Activated CD4-positive, alpha-beta T cell treated with anti-CD3 and anti-CD28 coated beads, Interleukin-2, amount 10 ng/mL, durations not matched to agents 24 days and 14 days (primary cell): ENCODE measurements at regions of chr19 and their contacts with region 1.

Region 1: DNA sequence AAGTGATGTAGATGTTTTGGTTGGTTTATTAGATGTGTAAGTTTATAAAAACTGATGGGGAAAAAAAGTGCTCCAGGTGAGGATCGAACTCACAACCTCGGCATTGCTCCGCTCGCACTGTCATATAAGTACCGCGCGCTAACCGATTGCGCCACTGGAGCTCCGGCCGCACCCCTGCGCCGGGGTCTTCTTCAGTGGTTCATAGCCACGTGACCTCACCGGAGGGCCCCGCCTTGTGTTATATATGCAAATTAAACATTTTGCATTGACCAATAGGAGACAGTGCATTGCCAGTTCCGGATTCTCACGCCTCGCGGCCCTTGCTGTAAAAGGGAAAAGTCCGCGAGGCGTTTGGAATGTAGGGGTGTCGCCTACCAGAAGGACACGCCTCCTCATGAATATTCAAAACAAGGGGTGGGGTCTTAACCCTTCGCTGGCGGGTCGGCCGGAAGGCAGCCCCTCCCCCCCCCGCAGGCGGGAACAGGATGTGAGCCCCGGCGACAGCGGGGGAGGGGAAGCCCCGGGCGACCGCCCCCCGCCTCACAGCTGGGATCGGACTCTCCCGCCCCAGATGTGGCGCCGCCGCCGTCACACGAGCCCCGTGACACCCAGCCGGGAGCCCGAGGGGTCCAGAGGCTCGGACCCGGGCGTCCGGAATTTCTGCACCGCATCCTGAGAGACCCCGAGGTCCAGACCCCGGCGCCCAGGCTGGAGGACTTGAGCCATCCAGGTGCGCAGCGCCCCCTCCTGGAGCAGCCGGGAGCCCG is at the start of gene PLEKHG2:
- DNase-seq: peak; percentile 99
- H3K4me3 Mint-ChIP-seq: peak within 1 kb of the TSS; percentile 87
- H3K27ac Mint-ChIP-seq: peak within 1 kb of the TSS; percentile 88
- H3K4me1 Mint-ChIP-seq: peaks cover 47% of the 10 kb centered on the region
- H3K27me3 Mint-ChIP-seq: no peaks in the 10 kb centered on the region
- total RNA-seq, gene PLEKHG2: 42.0 and 46.1 TPM in 2 replicates

Region 2: DNA sequence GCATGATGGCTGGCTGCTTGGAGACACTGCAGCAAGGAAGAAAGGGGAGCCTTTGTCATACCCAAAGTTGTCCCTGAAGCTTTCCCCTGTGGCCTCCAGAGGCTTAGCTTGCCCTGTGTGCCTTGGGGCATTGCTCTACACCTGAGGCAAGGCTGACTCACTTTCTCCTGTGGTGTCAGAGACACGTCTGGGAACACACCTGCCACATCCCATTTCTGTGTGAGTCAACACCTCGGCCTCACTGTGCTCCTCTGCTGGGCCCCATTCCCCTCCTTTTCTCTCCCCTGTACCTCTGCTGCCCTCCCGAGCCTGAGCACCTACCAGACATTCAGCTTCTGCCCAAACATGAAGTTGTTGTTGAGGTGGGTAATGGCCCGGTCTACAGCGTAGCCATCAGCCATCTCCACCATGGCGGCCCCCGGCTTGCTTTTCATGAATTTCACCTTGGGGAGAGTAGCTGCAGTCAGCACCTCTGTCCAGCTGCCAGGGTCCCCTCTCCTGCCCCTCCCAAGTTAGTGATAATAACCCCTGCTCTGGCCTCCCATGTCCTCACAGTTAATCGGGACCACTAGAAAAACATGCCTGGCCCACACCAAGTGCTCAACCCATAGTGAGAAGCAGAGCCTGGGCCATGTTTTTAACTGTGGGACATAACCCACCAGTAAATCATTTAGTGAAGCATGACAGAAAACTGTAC is 573.6 kb before region 1 on chr19:
- intact Hi-C with region 1: no loop called
- DNase-seq: no peak
- H3K4me3 Mint-ChIP-seq: peak overlapping the region; percentile 28
- H3K27ac Mint-ChIP-seq: peak overlapping the region; percentile 85
- H3K4me1 Mint-ChIP-seq: peaks cover 44% of the 10 kb centered on the region
- H3K27me3 Mint-ChIP-seq: no peaks in the 10 kb centered on the region

Region 3: DNA sequence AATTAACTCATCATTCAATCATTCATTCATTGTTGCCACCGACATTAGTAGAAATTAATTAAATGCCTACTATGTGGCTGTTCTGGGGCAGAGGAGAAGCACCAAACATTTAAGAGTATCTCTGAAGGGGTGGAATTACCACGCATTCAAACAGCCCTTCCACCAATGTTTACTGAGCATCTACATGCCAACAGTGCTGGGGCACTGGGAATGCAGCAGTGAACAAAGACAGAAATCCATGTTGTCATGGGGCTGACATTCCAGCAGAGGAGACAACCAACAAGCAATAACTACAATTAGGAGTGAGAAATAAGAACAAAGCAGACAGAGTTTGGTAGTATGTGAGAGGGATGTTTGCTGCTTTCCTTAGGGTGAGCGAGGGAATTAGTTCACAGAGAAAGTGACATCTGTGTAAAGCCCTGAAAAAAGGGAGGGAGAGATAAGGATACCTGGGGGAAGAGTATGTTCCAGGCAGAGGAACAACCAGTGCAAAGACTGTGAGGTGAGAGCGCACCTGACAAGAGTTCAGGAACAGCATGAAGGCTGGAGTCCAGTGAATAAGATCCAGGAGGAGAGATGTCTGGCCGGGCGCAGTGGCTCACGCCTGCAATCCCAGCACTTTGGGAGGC is 288.0 kb before region 1 on chr19:
- intact Hi-C with region 1: loop called (anchors 1 kb)
- DNase-seq: no peak
- H3K4me3 Mint-ChIP-seq: peak overlapping the region; percentile 68
- H3K27ac Mint-ChIP-seq: peak overlapping the region; percentile 76
- H3K4me1 Mint-ChIP-seq: peaks cover 27% of the 10 kb centered on the region
- H3K27me3 Mint-ChIP-seq: peaks cover 7% of the 10 kb centered on the region

Region 4: DNA sequence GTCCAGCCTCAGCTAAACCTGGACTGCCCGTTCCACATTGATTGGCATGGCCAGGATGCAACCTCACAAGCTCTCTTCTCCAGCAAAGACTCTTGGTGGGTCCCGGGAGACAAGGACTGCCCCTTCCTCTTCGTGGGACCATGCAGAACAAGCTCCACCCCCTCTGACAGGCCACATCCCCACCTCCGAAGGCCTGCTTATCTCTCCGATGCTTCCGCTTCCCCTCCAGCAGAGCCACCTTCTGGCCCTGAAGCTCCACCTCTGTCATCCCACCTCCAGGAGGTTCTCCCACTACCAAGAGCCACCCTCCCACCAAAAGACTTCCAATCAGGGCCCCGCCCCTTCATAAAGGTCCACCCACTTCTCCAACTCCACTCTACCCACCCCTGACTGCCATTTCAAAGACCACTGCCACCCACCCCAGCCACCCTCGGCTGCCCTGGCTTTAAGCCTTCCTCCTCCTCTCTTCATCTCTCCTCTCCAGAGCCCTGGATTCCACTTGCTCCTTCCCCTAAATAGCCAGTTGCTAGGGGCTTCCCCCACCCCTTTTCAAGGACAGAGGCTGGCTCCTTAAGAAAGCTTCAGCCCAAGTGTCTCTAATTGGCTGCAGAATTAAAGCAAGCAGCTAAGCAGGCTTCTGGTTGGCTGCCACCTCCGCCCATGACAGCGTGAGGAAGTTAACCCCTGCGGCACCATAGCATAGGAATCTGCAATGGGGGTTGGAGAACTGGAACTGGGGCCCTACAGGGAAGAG is 101.5 kb before region 1 on chr19:
- intact Hi-C with region 1: no loop called
- DNase-seq: no peak
- H3K4me3 Mint-ChIP-seq: no peak overlapping the region
- H3K27ac Mint-ChIP-seq: no peak overlapping the region
- H3K4me1 Mint-ChIP-seq: no peaks in the 10 kb centered on the region
- H3K27me3 Mint-ChIP-seq: no peaks in the 10 kb centered on the region

Region 5: DNA sequence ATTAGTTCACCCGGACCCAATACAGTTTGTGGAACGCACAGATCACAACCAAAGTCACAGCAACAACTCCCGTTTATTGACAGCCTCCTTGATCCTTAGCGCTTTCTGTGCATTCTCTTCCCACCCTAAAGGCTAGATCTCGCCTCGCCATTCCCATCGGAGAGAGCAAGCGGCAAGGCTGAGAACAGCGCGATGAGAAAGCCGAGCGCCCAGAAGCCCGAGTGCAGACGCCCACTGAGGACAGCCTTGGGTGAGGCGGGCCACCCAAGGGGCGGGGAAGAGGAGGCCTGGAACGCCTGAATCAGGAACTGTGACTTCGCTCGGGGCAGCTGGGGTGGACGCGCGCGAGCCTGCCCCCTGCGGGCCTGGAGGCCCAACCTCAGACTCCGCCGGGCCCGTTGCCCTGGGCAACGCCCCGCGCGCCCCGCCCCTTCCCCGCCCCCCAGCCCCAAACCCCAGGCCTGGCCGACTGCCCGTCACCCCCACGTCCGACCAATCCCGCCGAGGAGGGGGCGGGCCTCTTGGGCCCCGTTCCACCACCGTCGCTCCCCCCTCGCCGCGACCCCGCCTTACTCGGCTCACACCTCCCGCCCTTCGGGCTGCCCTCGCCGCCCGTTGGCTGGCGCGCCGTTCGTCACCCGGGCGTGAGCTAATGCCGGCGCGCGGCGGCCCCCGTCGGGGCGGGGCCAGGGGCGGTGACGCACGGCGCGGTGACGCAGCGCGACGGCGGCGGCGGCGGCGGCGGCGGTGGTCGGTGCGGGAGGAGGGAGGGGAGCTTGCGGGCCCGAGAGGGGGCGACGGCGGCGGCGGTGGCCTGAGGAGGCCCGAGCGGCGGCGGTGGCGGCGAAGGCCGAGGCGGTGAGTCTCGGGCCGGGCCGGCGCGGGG is 70.3 kb before region 1 on chr19 and contains the start of gene SAMD4B:
- intact Hi-C with region 1: loop called (anchors 2 kb)
- DNase-seq: peak; percentile 100
- H3K4me3 Mint-ChIP-seq: peak within 1 kb of the TSS; percentile 91
- H3K27ac Mint-ChIP-seq: peak within 1 kb of the TSS; percentile 90
- H3K4me1 Mint-ChIP-seq: peaks cover 68% of the 10 kb centered on the region
- H3K27me3 Mint-ChIP-seq: no peaks in the 10 kb centered on the region
- total RNA-seq, gene SAMD4B: 68.9 and 71.4 TPM in 2 replicates

Region 6: DNA sequence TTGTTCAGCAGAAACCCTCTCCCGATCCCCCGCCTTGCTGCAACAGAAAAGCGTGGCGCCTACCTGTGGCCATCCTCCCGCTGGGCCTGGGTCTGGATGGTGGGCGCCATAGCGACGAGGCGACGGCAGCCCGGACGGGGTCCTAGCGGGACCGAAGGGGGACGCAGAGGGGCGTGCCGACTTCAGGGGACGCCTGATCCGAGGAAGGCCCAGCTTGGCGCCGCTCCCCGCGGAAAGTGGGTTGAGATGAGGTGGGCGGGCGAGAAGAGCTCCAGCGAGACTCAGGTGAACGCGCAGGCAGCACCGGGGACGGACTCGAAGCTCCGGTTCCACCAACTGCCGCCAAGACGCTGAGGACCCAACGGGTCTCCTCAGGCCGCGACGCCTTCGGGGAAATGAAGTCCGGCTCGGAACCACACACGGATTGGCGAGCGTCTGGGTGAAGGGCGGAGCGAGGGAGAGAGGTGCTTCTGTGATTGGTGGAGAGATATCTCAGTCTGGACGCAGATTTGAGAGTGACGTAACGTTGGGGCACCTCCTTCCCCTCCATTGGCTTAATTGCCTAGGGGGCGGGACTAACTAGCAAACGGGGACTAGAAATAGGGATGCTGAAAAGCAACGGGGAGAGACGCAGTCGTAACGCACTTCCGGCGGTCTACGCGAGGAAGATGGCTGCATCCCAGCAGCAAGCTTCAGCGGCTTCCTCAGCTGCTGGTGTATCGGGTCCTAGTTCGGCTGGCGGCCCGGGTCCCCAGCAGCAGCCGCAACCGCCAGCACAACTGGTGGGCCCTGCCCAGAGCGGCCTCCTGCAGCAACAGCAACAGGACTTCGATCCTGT is 21.3 kb before region 1 on chr19 and contains the starts of genes MED29 and PAF1:
- intact Hi-C with region 1: loop called (anchors 1 kb)
- DNase-seq: peak; percentile 99
- H3K4me3 Mint-ChIP-seq: peak within 1 kb of the TSS; percentile 98
- H3K27ac Mint-ChIP-seq: peak within 1 kb of the TSS; percentile 97
- H3K4me1 Mint-ChIP-seq: peaks cover 28% of the 10 kb centered on the region
- H3K27me3 Mint-ChIP-seq: no peaks in the 10 kb centered on the region
- total RNA-seq, gene MED29: 36.0 and 38.7 TPM in 2 replicates
- total RNA-seq, gene PAF1: 47.1 and 50.6 TPM in 2 replicates

Region 7: GRCh38 chr19:39435499-39436349 is 23.4 kb after region 1 on chr19 and contains the start of gene RPS16:
- intact Hi-C with region 1: loop called (anchors 1 kb)
- DNase-seq: peak; percentile 100
- H3K4me3 Mint-ChIP-seq: peak within 1 kb of the TSS; percentile 91
- H3K27ac Mint-ChIP-seq: peak within 1 kb of the TSS; percentile 99
- H3K4me1 Mint-ChIP-seq: peaks cover 45% of the 10 kb centered on the region
- H3K27me3 Mint-ChIP-seq: no peaks in the 10 kb centered on the region
- total RNA-seq, gene RPS16: 2,597 and 2,671 TPM in 2 replicates

Region 8: DNA sequence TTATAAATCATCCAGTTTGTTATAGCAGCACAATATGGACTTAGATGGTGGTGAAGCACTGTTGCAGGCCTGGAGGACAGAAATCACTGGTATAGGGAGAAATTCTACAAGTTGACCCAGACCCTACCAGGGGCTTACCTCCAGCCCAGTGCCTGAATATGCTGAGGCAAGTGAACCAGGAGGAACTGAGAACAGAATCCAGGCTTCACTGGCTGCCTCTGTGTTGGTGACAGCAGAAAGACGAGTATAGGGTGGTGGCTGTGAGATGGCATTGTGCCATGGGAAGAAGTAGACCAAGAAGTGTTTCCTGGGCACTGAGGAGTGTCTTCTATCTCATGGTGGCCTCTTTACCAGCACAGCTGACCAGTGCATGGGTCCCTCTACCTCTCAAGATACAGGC is 143.6 kb after region 1 on chr19:
- intact Hi-C with region 1: no loop called
- DNase-seq: peak; percentile 49
- H3K4me3 Mint-ChIP-seq: no peak overlapping the region
- H3K27ac Mint-ChIP-seq: no peak overlapping the region
- H3K4me1 Mint-ChIP-seq: peaks cover 42% of the 10 kb centered on the region
- H3K27me3 Mint-ChIP-seq: no peaks in the 10 kb centered on the region

Region 9: GRCh38 chr19:39661565-39661964 is 249.3 kb after region 1 on chr19:
- intact Hi-C with region 1: no loop called
- DNase-seq: no peak
- H3K4me3 Mint-ChIP-seq: no peak overlapping the region
- H3K27ac Mint-ChIP-seq: no peak overlapping the region
- H3K4me1 Mint-ChIP-seq: no peaks in the 10 kb centered on the region
- H3K27me3 Mint-ChIP-seq: peaks cover 4% of the 10 kb centered on the region